Activated CD4-positive, alpha-beta T cell treated with anti-CD3 and anti-CD28 coated beads for 36 hours (primary cell): ENCODE measurements at regions of chr19 and their contacts with region 1.

Region 1: DNA sequence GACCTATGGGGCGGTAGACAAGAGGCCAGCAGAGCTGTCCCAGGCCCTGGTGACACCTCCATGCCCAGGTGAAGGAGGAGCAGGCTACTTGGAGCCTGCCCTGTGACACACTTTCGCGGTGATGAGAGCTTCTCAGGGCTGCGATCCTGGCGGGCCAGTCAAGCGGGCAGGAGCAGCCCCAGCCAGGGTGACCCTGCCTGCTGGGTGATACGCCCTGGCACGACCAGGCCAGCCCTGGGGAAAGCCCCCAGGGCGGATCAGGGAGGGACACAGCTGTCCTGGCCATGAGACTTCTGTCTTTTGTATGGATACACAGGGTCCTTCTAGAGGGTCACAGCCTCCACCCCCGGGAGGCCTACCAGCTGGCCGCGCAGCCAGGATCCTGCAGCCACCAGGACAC is 13.0 kb downstream of the DNM2 start:
- DNase-seq: no peak
- ATAC-seq: no peak
- H3K4me3 Mint-ChIP-seq: no peak overlapping the region
- H3K27ac Mint-ChIP-seq: peak overlapping the region; percentile 87
- H3K4me1 Mint-ChIP-seq: peaks cover 53% of the 10 kb centered on the region
- H3K27me3 Mint-ChIP-seq: no peaks in the 10 kb centered on the region

Region 2: DNA sequence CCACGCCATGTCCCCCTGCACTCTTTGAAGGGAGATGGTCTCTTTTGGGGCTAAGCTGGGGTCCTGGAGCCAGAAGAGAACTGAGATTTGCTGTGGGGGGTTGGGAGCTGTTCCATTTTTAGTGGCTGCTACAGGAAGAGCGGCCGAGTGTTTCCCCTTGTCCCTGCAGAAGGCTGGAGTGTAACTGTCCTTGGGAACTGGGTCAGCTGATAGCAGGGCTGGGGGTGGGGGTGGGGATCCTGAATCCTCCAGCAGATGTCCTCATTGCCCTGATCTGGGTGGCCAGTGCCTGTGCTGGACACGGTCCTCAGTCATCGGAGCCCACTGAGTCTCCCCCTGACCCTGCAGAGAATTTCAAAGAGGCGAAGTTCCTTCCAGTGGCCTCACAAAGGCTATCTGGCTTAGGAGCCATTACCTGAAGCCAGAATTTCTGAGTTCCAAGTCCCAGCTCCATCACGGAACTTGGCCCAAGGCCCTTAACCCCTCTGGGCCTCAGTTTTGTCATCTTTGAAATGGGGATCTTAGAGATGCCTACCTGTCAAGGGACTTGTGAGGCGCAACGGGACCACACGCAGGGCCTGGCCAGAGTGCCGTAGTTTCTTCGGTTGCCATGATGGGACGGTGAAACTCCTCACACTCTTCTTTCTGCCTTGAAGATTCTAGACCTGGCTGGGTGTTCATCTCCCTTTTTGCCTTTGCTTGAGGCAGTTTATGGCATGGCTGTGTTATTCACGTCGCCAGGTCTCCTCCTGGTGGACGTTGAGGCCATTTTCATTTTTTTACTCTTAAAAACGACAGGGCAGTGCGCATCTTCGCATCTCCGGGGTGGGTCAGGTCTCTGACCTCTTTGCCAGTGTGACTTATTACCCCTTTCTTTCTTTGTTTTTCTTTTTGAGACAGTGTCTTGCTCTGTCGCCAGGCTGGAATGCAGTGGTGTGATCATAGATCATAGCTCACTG is 38.9 kb after region 1 on chr19:
- CTCF ChIA-PET with region 1: no interaction called
- POLR2A ChIA-PET with region 1: interaction called, 10 read pairs
- intact Hi-C with region 1: no loop called
- DNase-seq: peak; percentile 28
- ATAC-seq: no peak
- H3K4me3 Mint-ChIP-seq: no peak overlapping the region
- H3K27ac Mint-ChIP-seq: peak overlapping the region; percentile 13
- H3K4me1 Mint-ChIP-seq: peaks cover 17% of the 10 kb centered on the region
- H3K27me3 Mint-ChIP-seq: no peaks in the 10 kb centered on the region

Region 3: GRCh38 chr19:10876459-10877240 is 145.7 kb after region 1 on chr19:
- CTCF ChIA-PET with region 1: no interaction called
- POLR2A ChIA-PET with region 1: no interaction called
- intact Hi-C with region 1: no loop called
- DNase-seq: peak; percentile 25
- ATAC-seq: peak; percentile 14
- H3K4me3 Mint-ChIP-seq: no peak overlapping the region
- H3K27ac Mint-ChIP-seq: peak overlapping the region; percentile 47
- H3K4me1 Mint-ChIP-seq: peaks cover 42% of the 10 kb centered on the region
- H3K27me3 Mint-ChIP-seq: no peaks in the 10 kb centered on the region